Activated CD4-positive, alpha-beta T cell treated with anti-CD3 and anti-CD28 coated beads for 36 hours (primary cell): ENCODE measurements at regions of chr7 and their contacts with region 1.

Region 1: DNA sequence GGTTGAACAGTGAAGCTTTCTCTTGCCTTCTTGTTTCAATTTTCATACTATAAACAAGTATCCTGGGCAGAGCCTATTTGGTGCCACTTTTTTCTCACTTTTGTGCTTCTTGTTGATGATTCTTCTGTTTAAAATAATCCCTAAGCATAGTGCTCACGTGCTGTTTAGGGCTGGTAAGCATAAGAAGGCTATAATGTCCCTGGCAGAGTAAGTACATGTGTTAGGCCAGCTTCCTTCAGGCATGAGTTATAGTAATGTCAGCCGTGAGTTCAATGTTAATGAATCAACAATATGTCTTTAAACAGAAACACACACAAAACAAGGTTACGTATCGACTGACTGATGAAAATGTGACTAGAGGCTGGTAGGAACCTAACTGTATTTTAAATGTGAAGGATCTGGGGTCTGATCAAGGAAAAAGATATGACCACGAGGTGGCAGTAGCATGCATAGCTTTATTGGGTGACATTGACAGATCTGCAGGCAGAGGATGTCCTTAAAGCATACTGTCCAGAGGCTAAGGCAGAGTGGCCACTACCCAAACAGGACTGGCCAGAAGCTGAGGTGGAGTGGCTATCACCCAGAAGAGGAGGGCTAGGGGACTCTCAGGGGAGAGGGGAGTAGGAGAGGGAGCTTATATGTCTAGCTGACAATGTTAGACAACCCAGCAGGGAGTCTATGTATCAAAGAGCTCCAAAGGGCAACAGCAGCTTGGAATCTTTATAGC is 113.7 kb downstream of the BRAF start:
- DNase-seq: peak; percentile 68
- ATAC-seq: peak; percentile 77
- H3K4me3 Mint-ChIP-seq: no peak overlapping the region
- H3K27ac Mint-ChIP-seq: no peak overlapping the region
- H3K4me1 Mint-ChIP-seq: peaks cover 8% of the 10 kb centered on the region
- H3K27me3 Mint-ChIP-seq: no peaks in the 10 kb centered on the region

Region 2: GRCh38 chr7:140714331-140715040 is 96.5 kb before region 1 on chr7:
- CTCF ChIA-PET with region 1: no interaction called
- POLR2A ChIA-PET with region 1: no interaction called
- intact Hi-C with region 1: no loop called
- DNase-seq: no peak
- ATAC-seq: no peak
- H3K4me3 Mint-ChIP-seq: no peak overlapping the region
- H3K27ac Mint-ChIP-seq: no peak overlapping the region
- H3K4me1 Mint-ChIP-seq: peaks cover 2% of the 10 kb centered on the region
- H3K27me3 Mint-ChIP-seq: no peaks in the 10 kb centered on the region

Region 3: DNA sequence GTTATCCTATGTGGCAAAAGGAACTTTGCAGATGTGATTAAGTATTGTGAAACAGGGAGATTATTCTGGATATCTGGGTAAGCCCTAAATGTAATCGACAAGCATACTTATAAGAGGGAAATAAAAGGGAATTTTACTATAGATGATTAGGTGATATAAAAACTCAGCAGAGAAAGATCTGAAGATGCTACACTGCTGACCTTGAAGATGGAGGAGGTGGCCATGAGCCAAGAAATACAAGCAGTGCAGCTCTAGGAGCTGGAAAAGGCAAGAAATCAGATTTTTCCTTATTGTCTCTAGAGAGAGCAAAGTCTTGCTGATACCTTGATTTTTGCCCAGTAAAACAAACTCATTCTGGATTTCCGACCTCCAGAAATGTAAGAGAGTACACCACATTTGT is 46.1 kb after region 1 on chr7:
- CTCF ChIA-PET with region 1: interaction called, 19 read pairs
- POLR2A ChIA-PET with region 1: no interaction called
- intact Hi-C with region 1: no loop called
- DNase-seq: no peak
- ATAC-seq: no peak
- H3K4me3 Mint-ChIP-seq: no peak overlapping the region
- H3K27ac Mint-ChIP-seq: no peak overlapping the region
- H3K4me1 Mint-ChIP-seq: peaks cover 32% of the 10 kb centered on the region
- H3K27me3 Mint-ChIP-seq: no peaks in the 10 kb centered on the region

Region 4: DNA sequence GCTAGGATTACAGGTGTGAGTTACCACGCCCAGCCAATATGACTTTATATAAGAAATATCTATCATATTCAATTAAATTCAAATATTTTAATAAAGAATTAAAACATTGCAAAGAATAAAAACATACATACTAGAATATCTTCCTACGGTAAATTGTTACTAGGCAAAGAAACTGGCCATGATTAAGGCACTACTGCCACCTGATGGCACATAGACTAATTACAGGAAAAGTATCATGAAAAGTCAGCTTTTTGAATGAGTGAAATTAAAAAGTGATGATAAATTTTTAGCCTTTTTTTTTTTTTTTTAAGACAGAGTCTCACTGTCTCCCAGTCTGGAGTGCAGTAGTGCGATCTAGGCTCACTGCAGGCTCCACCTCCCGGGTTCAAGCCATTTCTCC is 172.8 kb after region 1 on chr7:
- CTCF ChIA-PET with region 1: interaction called, 76 read pairs
- POLR2A ChIA-PET with region 1: no interaction called
- intact Hi-C with region 1: loop called (anchors 1 to 2 kb)
- DNase-seq: no peak
- ATAC-seq: no peak
- H3K4me3 Mint-ChIP-seq: no peak overlapping the region
- H3K27ac Mint-ChIP-seq: no peak overlapping the region
- H3K4me1 Mint-ChIP-seq: no peaks in the 10 kb centered on the region
- H3K27me3 Mint-ChIP-seq: peaks cover 2% of the 10 kb centered on the region